Endothelial cell of umbilical vein (primary cell): ENCODE measurements at regions of chr6 and their contacts with region 1.

Region 1: DNA sequence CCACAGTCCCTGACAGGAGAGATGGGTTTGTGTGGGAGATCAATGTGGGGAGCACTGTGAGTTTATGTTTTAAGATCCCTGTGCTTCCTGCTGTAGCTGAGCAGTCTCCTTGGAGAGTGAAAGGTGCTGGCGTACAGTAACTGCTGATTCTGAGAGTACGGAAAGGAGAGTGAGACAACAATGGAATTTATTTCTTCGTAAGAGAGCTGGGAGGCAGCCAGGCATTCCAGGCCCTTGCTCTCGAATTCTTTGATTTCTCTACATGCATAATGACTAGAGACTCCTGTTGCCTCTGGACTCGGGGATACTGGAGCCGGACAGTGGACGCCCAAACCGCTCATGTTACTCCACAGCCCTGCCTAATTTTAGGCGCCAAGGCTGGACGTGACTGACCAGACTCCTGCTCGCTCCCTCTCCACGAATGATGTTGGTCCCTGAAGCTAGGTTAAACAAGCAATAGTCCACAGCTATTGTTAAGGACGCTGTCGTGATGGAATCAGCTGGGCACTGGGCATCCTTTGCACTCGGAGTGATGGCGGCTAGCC is 131.0 kb upstream of the PHACTR1 start:
- DNase-seq: peak; percentile 96
- H3K4me3 ChIP-seq: peak overlapping the region in 1 of 3 experiments; percentile 25
- H3K27ac ChIP-seq: peak overlapping the region; percentile 100
- H3K4me1 ChIP-seq: peaks cover 51% of the 10 kb centered on the region
- H3K27me3 ChIP-seq: no peaks in the 10 kb centered on the region
- CTCF ChIP-seq: no peak
- POLR2A ChIP-seq: peak; percentile 49

Region 2: GRCh38 chr6:11212625-11213024 is 1372.9 kb before region 1 on chr6:
- CTCF ChIA-PET with region 1: no interaction called
- POLR2A ChIA-PET with region 1: no interaction called
- dilution Hi-C with region 1: no loop called
- intact Hi-C with region 1: loop called (anchors 10 kb)
- DNase-seq: peak; percentile 71
- H3K4me3 ChIP-seq: no peak overlapping the region
- H3K27ac ChIP-seq: peak overlapping the region; percentile 77
- H3K4me1 ChIP-seq: peaks cover 95% of the 10 kb centered on the region
- H3K27me3 ChIP-seq: no peaks in the 10 kb centered on the region
- CTCF ChIP-seq: no peak
- POLR2A ChIP-seq: no peak

Region 3: DNA sequence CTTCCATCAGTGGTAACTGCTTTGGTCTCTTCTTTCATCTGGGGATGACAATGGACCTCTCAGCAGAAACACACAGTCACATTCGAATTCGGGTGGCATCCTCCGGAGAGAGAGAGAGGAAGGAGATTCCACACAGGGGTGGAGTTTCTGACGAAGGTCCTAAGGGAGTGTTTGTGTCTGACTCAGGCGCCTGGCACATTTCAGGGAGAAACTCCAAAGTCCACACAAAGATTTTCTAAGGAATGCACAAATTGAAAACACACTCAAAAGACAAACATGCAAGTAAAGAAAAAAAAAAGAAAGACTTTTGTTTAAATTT is 289.4 kb before region 1 on chr6:
- CTCF ChIA-PET with region 1: interaction called, 3 read pairs
- POLR2A ChIA-PET with region 1: interaction called, 24 read pairs
- dilution Hi-C with region 1: loop called (anchors 10 kb)
- intact Hi-C with region 1: loop called (anchors 1 kb)
- DNase-seq: peak; percentile 53
- H3K4me3 ChIP-seq: peak overlapping the region in 2 of 3 experiments; percentile 91 to 96
- H3K27ac ChIP-seq: peak overlapping the region; percentile 98
- H3K4me1 ChIP-seq: peaks cover 30% of the 10 kb centered on the region
- H3K27me3 ChIP-seq: no peaks in the 10 kb centered on the region
- CTCF ChIP-seq: no peak
- POLR2A ChIP-seq: no peak

Region 4: GRCh38 chr6:12395898-12396297 is 189.7 kb before region 1 on chr6:
- CTCF ChIA-PET with region 1: interaction called, 5 read pairs
- POLR2A ChIA-PET with region 1: interaction called, 3 read pairs
- dilution Hi-C with region 1: no loop called
- intact Hi-C with region 1: loop called (anchors 5 kb)
- DNase-seq: peak; percentile 47
- H3K4me3 ChIP-seq: no peak overlapping the region
- H3K27ac ChIP-seq: no peak overlapping the region
- H3K4me1 ChIP-seq: peaks cover 26% of the 10 kb centered on the region
- H3K27me3 ChIP-seq: no peaks in the 10 kb centered on the region
- CTCF ChIP-seq: no peak
- POLR2A ChIP-seq: no peak

Region 5: GRCh38 chr6:12504319-12504966 is 81.1 kb before region 1 on chr6:
- CTCF ChIA-PET with region 1: interaction called, 11 read pairs
- POLR2A ChIA-PET with region 1: no interaction called
- dilution Hi-C with region 1: loop called (anchors 25 kb)
- intact Hi-C with region 1: no loop called
- DNase-seq: no peak
- H3K4me3 ChIP-seq: no peak overlapping the region
- H3K27ac ChIP-seq: no peak overlapping the region
- H3K4me1 ChIP-seq: no peaks in the 10 kb centered on the region
- H3K27me3 ChIP-seq: no peaks in the 10 kb centered on the region
- CTCF ChIP-seq: peak; percentile 25 to 46
- POLR2A ChIP-seq: no peak

Region 6: DNA sequence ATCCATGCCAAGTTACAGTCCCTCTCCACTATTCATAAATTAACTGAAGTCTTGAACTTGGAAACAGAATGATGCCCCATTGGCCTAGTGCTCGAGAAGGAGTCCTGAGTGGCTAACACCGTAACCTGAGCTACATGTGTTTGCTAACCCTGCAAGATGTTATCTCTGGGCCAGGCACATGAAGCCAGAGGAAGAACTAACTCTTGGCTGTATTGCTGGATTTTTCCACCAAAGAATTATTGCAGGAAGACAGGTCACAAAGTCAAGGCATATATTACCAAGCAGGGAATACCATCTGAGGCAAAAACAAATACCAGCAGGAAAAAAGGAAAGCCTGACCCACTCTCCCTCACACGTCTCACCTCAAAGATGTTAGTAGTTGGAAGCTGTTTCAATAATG is 17.9 kb before region 1 on chr6:
- CTCF ChIA-PET with region 1: interaction called, 17 read pairs
- POLR2A ChIA-PET with region 1: interaction called, 17 read pairs
- dilution Hi-C with region 1: no loop called
- intact Hi-C with region 1: loop called (anchors 1 kb)
- DNase-seq: peak; percentile 98
- H3K4me3 ChIP-seq: no peak overlapping the region
- H3K27ac ChIP-seq: peak overlapping the region; percentile 58
- H3K4me1 ChIP-seq: peaks cover 45% of the 10 kb centered on the region
- H3K27me3 ChIP-seq: no peaks in the 10 kb centered on the region
- CTCF ChIP-seq: no peak
- POLR2A ChIP-seq: peak; percentile 48